Activated CD4-positive, alpha-beta T cell treated with anti-CD3 and anti-CD28 coated beads, Interleukin-2, amount 10 ng/mL, durations not matched to agents 24 days and 14 days (primary cell): ENCODE measurements at regions of chr5 and their contacts with region 1.

Region 1: GRCh38 chr5:131165119-131165727 is at the start of gene HINT1:
- DNase-seq: peak; percentile 98
- H3K4me3 Mint-ChIP-seq: peak within 1 kb of the TSS; percentile 99
- H3K27ac Mint-ChIP-seq: peak within 1 kb of the TSS; percentile 100
- H3K4me1 Mint-ChIP-seq: peaks cover 45% of the 10 kb centered on the region
- H3K27me3 Mint-ChIP-seq: no peaks in the 10 kb centered on the region
- total RNA-seq, gene HINT1: 280 and 282 TPM in 2 replicates

Region 2: DNA sequence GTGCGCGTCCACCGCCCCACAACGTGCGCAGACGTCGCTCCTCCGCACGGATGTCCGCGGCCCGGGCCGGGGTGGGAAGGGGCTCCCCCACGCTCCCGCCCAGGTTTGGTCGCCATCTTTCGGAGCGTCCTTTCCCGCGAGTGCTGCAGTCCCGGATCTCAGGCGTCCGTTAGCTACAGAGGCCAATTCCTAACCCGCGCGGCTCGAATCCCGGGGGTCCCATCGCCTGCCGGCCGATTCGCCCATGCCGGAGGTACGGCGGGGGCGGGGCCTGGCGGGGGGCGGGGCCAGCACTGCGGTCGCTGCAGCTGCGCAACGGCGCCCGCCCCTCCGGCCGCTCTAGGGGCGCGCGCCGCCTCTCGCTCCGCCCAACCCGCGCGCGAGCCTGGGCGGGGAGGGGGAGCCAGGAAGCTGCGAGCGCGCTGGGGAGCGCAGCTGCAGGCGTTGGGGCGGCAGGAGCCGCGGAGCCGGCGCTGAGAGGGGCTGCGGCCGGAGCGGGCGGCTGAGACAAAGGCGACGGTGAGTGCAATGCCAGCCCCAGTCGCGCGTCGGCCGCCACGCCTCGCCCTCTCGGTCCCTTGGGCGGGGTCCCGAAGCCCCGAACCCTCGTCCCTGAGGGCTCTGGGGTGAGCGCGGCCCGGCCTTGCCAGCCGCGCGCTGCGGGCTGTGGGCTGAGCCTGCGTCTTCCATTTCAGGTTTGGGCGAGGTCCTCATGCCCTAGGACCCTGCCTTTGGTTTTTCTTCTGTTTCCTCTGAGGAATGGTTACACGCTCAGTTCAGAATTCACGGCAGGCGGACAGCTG is 98.6 kb after region 1 on chr5 and contains the start of gene CDC42SE2:
- intact Hi-C with region 1: loop called (anchors 1 kb)
- DNase-seq: peak; percentile 97
- H3K4me3 Mint-ChIP-seq: peak within 1 kb of the TSS; percentile 85
- H3K27ac Mint-ChIP-seq: peak within 1 kb of the TSS; percentile 93
- H3K4me1 Mint-ChIP-seq: peaks cover 34% of the 10 kb centered on the region
- H3K27me3 Mint-ChIP-seq: no peaks in the 10 kb centered on the region
- total RNA-seq, gene CDC42SE2: 96.2 and 99.0 TPM in 2 replicates

Region 3: GRCh38 chr5:131296213-131296672 is 131.0 kb after region 1 on chr5:
- intact Hi-C with region 1: no loop called
- DNase-seq: peak; percentile 74
- H3K4me3 Mint-ChIP-seq: peak overlapping the region; percentile 30
- H3K27ac Mint-ChIP-seq: peak overlapping the region; percentile 73
- H3K4me1 Mint-ChIP-seq: peaks cover 44% of the 10 kb centered on the region
- H3K27me3 Mint-ChIP-seq: no peaks in the 10 kb centered on the region

Region 4: DNA sequence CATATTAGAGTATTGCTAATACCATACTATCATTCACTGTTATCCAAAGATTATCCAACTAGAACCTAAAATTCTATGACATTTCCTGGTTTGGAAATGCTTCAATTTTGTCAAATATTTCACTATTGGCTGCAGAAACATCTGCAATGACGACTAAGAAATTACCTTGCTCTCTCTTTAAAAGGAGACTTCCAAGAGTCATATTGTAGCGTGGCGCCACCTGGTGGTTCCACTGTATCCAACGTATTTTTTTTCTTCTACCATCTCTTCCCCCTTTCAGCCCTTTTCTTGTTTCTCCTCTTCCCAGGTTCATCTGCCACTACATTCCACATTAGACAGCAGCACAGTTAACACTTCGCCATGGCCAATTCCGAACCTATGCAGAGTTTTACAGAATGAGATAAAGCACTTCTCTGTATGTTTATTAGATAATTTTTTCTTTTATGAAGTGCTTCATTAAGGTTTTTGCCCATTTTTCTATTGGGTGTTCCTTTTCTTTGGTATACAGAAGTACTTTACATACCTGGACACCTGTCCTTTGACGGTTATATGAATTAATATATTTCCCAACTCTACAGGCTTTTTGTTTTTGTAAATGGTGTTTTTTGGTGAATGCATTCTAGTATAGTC is 252.1 kb after region 1 on chr5:
- intact Hi-C with region 1: loop called (anchors 1 kb)
- DNase-seq: peak; percentile 93
- H3K4me3 Mint-ChIP-seq: peak overlapping the region; percentile 46
- H3K27ac Mint-ChIP-seq: peak overlapping the region; percentile 39
- H3K4me1 Mint-ChIP-seq: peaks cover 40% of the 10 kb centered on the region
- H3K27me3 Mint-ChIP-seq: no peaks in the 10 kb centered on the region